ENCODE measurements at regions of chr7 and their contacts with region 1.

Region 1: DNA sequence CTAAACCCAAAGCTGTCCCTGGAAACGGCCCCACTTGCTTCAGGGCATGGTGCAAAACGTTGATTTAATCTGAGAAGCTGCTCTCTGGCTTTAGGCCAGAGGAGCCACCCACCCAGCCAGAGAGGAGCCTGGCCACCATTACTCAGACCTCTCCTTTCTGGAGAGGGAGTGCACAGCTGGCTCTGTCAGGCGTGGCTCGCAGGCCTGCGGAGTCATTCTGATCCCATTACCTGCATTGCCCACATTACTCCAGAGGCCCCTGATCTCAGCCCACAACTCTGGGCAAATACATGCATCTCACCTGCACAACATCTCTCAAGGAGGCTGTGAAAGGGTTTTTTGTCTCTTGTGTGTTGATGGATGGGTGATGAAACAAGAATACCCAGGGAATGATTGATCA is 370.0 kb upstream of the IGFBP3 start:
- DNase-seq: peak; percentile 85
- H3K4me3 Mint-ChIP-seq: peak overlapping the region; percentile 41
- H3K27ac Mint-ChIP-seq: peak overlapping the region; percentile 90
- H3K4me1 Mint-ChIP-seq: peaks cover 41% of the 10 kb centered on the region
- H3K27me3 Mint-ChIP-seq: no peaks in the 10 kb centered on the region
- CTCF ChIP-seq: no peak

Region 2: DNA sequence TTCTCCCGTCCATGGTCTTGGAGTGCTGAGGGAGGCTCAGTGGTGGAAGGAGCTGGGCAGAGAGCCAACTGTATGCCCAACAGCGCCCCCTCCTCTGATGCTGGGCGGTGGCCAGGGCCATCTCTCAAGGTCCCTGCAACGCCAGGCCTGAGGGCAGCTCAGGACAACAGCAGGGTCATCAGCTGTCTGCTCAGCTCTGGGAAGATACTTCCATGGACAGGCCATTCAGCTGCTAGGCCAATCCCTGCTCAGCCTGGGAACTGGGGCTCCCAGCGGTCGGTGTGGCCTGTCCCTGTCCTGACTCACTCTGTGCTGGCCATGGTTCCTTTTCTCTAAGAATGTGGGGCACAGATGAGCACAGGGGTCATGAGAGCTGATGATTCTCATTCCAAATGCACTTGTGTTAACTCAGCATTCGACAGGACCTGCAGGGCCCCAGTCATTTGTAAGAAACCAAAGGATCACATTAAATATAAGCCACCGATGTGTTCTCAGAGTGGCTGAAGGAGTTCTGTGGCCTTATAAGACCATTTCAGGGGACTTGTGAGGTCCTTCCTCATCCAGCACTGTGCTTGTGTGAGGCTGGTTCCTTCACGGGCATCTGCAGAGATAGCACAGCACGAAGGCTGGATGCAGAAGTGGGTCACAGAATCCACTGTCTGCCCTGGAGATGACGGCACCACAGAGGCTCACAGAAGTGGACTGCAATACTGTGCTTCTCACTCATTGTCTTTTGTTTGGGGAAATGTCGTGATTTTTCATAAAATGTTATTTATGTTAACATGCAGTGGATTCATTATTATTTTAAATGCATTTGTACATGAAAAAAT is 643.9 kb before region 1 on chr7:
- CTCF ChIA-PET with region 1: no interaction called
- POLR2A ChIA-PET with region 1: no interaction called
- intact Hi-C with region 1: no loop called
- DNase-seq: no peak
- H3K4me3 Mint-ChIP-seq: no peak overlapping the region
- H3K27ac Mint-ChIP-seq: no peak overlapping the region
- H3K4me1 Mint-ChIP-seq: no peaks in the 10 kb centered on the region
- H3K27me3 Mint-ChIP-seq: no peaks in the 10 kb centered on the region
- CTCF ChIP-seq: no peak

Region 3: GRCh38 chr7:46220066-46220630 is 70.9 kb before region 1 on chr7:
- CTCF ChIA-PET with region 1: interaction called, 3 read pairs
- POLR2A ChIA-PET with region 1: interaction called, 15 read pairs
- intact Hi-C with region 1: no loop called
- DNase-seq: peak; percentile 68
- H3K4me3 Mint-ChIP-seq: no peak overlapping the region
- H3K27ac Mint-ChIP-seq: peak overlapping the region; percentile 89
- H3K4me1 Mint-ChIP-seq: peaks cover 11% of the 10 kb centered on the region
- H3K27me3 Mint-ChIP-seq: peaks cover 4% of the 10 kb centered on the region
- CTCF ChIP-seq: no peak

Region 4: GRCh38 chr7:46322937-46323336 is 31.9 kb after region 1 on chr7:
- CTCF ChIA-PET with region 1: no interaction called
- POLR2A ChIA-PET with region 1: no interaction called
- intact Hi-C with region 1: no loop called
- DNase-seq: no peak
- H3K4me3 Mint-ChIP-seq: no peak overlapping the region
- H3K27ac Mint-ChIP-seq: no peak overlapping the region
- H3K4me1 Mint-ChIP-seq: no peaks in the 10 kb centered on the region
- H3K27me3 Mint-ChIP-seq: no peaks in the 10 kb centered on the region
- CTCF ChIP-seq: no peak